Naive thymus-derived CD4-positive, alpha-beta T cell (primary cell): ENCODE measurements at regions of chr3 and their contacts with region 1.

Region 1: GRCh38 chr3:43286115-43286840 is at the start of gene SNRK:
- DNase-seq: peak; percentile 84 to 99 (median 94)
- ATAC-seq: peak; percentile 93
- H3K4me3 ChIP-seq: peak within 1 kb of the TSS; percentile 79
- H3K4me3 Mint-ChIP-seq: peak within 1 kb of the TSS; percentile 97 to 100 (median 99)
- H3K27ac ChIP-seq: peak within 1 kb of the TSS; percentile 99
- H3K27ac Mint-ChIP-seq: peak within 1 kb of the TSS; percentile 93 to 100 (median 99)
- H3K4me1 ChIP-seq: peaks cover 28% of the 10 kb centered on the region in 2 donors
- H3K4me1 Mint-ChIP-seq: peaks cover 27 to 34% (median 33%) of the 10 kb centered on the region in 7 donors
- H3K27me3 ChIP-seq: no peaks in the 10 kb centered on the region
- H3K27me3 Mint-ChIP-seq: peaks cover 0 to 16% (median 0%) of the 10 kb centered on the region in 5 donors
- total RNA-seq, gene SNRK: 71.9 to 176 (median 146) TPM

Region 2: GRCh38 chr3:42961633-42962032 is 324.6 kb before region 1 on chr3:
- CTCF ChIA-PET with region 1: interaction called, 5 read pairs
- POLR2A ChIA-PET with region 1: interaction called, 4 read pairs
- intact Hi-C with region 1: loop called in 1 of 2 experiments (anchors 2 kb)
- DNase-seq: peak in 6 of 9 donors; percentile 11 to 50 (median 42)
- ATAC-seq: peak; percentile 45
- H3K4me3 ChIP-seq: no peak overlapping the region
- H3K4me3 Mint-ChIP-seq: no peak overlapping the region
- H3K27ac ChIP-seq: no peak overlapping the region
- H3K27ac Mint-ChIP-seq: peak overlapping the region in 2 of 9 donors; percentile 2 to 24
- H3K4me1 ChIP-seq: peaks cover 0 to 27% of the 10 kb centered on the region in 2 donors
- H3K4me1 Mint-ChIP-seq: peaks cover 0 to 38% (median 34%) of the 10 kb centered on the region in 7 donors
- H3K27me3 ChIP-seq: no peaks in the 10 kb centered on the region
- H3K27me3 Mint-ChIP-seq: peaks cover 0 to 19% (median 3%) of the 10 kb centered on the region in 5 donors

Region 3: DNA sequence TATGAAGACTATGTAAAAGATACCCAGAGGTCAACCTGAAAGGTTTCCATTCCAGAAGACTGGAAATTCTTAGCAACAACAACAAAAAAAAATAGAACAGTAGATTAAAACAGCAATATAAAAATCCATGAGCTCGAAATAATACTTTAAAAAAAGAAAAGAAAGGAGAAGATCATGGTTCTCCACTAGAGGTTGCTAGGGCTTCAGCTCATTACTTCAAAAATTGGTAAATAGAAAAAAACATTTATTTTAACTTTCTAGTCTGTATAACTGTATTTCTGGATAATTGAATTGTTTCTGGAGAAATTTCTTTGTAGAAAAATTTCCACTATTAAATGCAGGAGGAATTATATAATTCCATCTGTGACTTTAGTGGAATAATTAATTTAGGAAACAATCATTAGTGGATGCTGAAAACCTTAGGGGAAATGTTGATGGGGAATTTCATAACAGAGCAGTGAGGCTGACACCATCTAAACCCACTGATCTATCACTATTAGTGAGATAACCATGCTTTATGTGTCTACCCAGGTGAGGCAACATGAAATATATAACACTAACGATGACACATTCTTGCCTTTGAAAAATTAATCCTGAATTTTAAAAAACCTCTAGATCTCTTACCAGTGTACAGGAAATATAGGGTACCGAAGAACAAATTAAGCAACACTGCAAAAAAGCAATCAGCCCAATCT is 62.5 kb before region 1 on chr3:
- CTCF ChIA-PET with region 1: interaction called, 4 read pairs
- POLR2A ChIA-PET with region 1: interaction called, 6 read pairs
- intact Hi-C with region 1: loop called in 1 of 2 experiments (anchors 1 kb)
- DNase-seq: peak in 4 of 9 donors; percentile 18 to 46 (median 38)
- ATAC-seq: peak; percentile 57
- H3K4me3 ChIP-seq: no peak overlapping the region
- H3K4me3 Mint-ChIP-seq: peak overlapping the region in 6 of 10 donors; percentile 20 to 77 (median 47)
- H3K27ac ChIP-seq: no peak overlapping the region
- H3K27ac Mint-ChIP-seq: peak overlapping the region in 7 of 9 donors; percentile 18 to 93 (median 87)
- H3K4me1 ChIP-seq: peaks cover 13 to 56% of the 10 kb centered on the region in 2 donors
- H3K4me1 Mint-ChIP-seq: peaks cover 25 to 67% (median 63%) of the 10 kb centered on the region in 7 donors
- H3K27me3 ChIP-seq: no peaks in the 10 kb centered on the region
- H3K27me3 Mint-ChIP-seq: no peaks in the 10 kb centered on the region

Region 4: DNA sequence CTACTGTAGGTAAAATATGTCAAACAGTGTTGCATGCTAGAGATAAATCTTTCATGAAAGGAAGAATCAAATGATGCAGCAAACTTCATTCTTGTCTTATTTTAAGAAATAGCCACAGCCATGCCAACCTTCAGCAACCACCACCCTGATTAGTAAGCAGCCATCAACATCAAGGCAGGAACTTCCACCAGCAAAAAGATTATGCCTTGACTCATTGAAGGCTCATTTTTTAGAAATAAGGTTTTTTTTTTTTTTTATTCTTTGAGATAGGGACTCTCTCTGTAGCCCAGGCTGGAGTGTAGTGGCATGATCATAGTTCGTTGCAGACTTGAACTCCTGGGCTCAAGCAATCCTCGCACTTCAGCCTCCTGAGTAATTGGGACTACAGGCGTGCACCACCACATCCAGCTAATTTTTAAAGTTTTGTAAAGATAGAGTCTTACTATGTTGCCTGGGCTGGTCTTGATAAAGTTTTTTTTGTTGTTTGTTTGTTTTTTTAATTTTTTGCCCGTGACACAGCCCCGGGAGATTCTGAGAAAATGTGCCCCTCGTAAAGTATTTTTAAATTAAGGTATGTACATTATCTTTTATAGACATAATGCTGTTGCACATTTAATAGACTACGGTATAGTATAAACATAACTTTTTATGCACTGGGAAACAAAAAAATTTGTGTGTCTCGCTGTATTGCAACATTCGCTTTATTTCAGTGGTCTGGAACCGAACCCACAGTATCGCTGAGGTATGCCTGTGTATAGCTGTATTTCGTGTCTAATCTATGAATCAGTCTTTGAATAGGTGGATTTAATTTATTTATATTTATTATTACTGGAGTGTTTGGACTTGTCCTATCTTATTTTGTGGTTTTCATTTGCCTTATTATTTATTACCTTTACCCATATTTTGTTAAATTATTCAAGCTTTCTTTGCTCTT is 23.4 kb after region 1 on chr3:
- CTCF ChIA-PET with region 1: no interaction called
- POLR2A ChIA-PET with region 1: interaction called, 8 read pairs
- intact Hi-C with region 1: loop called in 1 of 2 experiments (anchors 2 kb)
- DNase-seq: no peak
- ATAC-seq: no peak
- H3K4me3 ChIP-seq: no peak overlapping the region
- H3K4me3 Mint-ChIP-seq: peak overlapping the region in 9 of 10 donors; percentile 16 to 73 (median 49)
- H3K27ac ChIP-seq: no peak overlapping the region
- H3K27ac Mint-ChIP-seq: peak overlapping the region in 7 of 9 donors; percentile 1 to 80 (median 65)
- H3K4me1 ChIP-seq: peaks cover 28 to 30% of the 10 kb centered on the region in 2 donors
- H3K4me1 Mint-ChIP-seq: peaks cover 40 to 94% (median 91%) of the 10 kb centered on the region in 7 donors
- H3K27me3 ChIP-seq: no peaks in the 10 kb centered on the region
- H3K27me3 Mint-ChIP-seq: no peaks in the 10 kb centered on the region

Region 5: GRCh38 chr3:43389388-43390254 is 103.3 kb after region 1 on chr3:
- CTCF ChIA-PET with region 1: interaction called, 3 read pairs
- POLR2A ChIA-PET with region 1: interaction called, 15 read pairs
- intact Hi-C with region 1: loop called (anchors 1 kb)
- DNase-seq: peak in 8 of 9 donors; percentile 58 to 91 (median 85)
- ATAC-seq: peak; percentile 98
- H3K4me3 ChIP-seq: peak overlapping the region; percentile 18
- H3K4me3 Mint-ChIP-seq: peak overlapping the region in 9 of 10 donors; percentile 48 to 81 (median 60)
- H3K27ac ChIP-seq: peak overlapping the region; percentile 50
- H3K27ac Mint-ChIP-seq: peak overlapping the region; percentile 85 to 97 (median 94)
- H3K4me1 ChIP-seq: peaks cover 30 to 39% of the 10 kb centered on the region in 2 donors
- H3K4me1 Mint-ChIP-seq: peaks cover 40 to 83% (median 70%) of the 10 kb centered on the region in 7 donors
- H3K27me3 ChIP-seq: no peaks in the 10 kb centered on the region
- H3K27me3 Mint-ChIP-seq: peaks cover 0 to 12% (median 0%) of the 10 kb centered on the region in 5 donors

Region 6: GRCh38 chr3:43690400-43691119 is 404.3 kb after region 1 on chr3 and contains the start of gene ABHD5:
- CTCF ChIA-PET with region 1: no interaction called
- POLR2A ChIA-PET with region 1: no interaction called
- intact Hi-C with region 1: loop called (anchors 2 to 5 kb)
- DNase-seq: peak; percentile 94 to 99 (median 96)
- ATAC-seq: peak; percentile 96
- H3K4me3 ChIP-seq: peak within 1 kb of the TSS; percentile 74
- H3K4me3 Mint-ChIP-seq: peak within 1 kb of the TSS; percentile 91 to 98 (median 94)
- H3K27ac ChIP-seq: peak within 1 kb of the TSS; percentile 85
- H3K27ac Mint-ChIP-seq: peak within 1 kb of the TSS; percentile 90 to 97 (median 92)
- H3K4me1 ChIP-seq: peaks cover 8% of the 10 kb centered on the region in 2 donors
- H3K4me1 Mint-ChIP-seq: peaks cover 11 to 47% (median 37%) of the 10 kb centered on the region in 7 donors
- H3K27me3 ChIP-seq: no peaks in the 10 kb centered on the region
- H3K27me3 Mint-ChIP-seq: peaks cover 0 to 6% (median 0%) of the 10 kb centered on the region in 5 donors
- total RNA-seq, gene ABHD5: 6.1 to 21.0 (median 12.1) TPM

Region 7: GRCh38 chr3:44454258-44454657 is 1168.0 kb after region 1 on chr3:
- CTCF ChIA-PET with region 1: no interaction called
- POLR2A ChIA-PET with region 1: no interaction called
- intact Hi-C with region 1: no loop called
- DNase-seq: no peak
- ATAC-seq: no peak
- H3K4me3 ChIP-seq: no peak overlapping the region
- H3K4me3 Mint-ChIP-seq: no peak overlapping the region
- H3K27ac ChIP-seq: no peak overlapping the region
- H3K27ac Mint-ChIP-seq: peak overlapping the region in 1 of 9 donors; percentile 62
- H3K4me1 ChIP-seq: no peaks in the 10 kb centered on the region
- H3K4me1 Mint-ChIP-seq: peaks cover 0 to 20% (median 5%) of the 10 kb centered on the region in 7 donors
- H3K27me3 ChIP-seq: no peaks in the 10 kb centered on the region
- H3K27me3 Mint-ChIP-seq: no peaks in the 10 kb centered on the region